ENCODE measurements at regions of chr2 and their contacts with region 1.

Region 1: DNA sequence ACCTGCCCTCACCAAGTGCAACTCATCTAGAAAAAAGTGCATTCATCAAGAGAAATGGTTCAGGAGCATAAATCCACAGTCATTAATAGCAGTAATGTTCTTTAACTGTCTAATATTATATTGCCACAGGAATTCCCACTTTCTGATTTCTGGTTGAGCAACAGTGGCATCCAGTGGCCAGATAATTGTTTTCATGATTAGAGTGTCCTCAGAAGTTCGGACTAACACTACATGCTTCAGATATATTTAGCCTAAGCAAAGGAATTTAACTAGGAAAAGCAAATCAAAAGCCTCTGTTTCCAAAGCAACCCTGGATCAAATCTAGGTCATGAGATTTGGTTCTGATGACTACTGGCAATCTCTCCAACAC is 9.8 kb upstream of the ERBB4 start:
- DNase-seq: peak; percentile 67
- H3K4me3 ChIP-seq: no peak overlapping the region
- H3K27ac ChIP-seq: no peak overlapping the region
- H3K4me1 ChIP-seq: no peaks in the 10 kb centered on the region
- H3K27me3 ChIP-seq: no peaks in the 10 kb centered on the region

Region 2: DNA sequence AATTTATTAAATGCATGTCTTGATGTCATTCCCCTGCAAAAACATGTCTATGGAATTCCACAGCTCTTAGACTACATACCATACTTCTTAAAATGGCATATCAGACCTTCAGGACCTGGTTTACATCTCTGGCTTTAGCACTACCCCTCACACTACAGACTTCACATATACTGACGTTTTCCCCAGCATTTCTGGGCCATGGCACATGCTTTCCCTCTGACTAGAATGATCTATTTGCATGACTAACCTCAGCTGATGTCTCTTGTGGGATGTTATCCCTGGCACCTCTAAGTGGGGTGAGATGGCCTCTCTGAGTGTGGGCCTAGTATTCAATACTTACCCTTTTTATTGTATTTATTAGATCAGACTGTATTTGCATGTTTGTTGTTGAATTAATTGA is 391.4 kb before region 1 on chr2:
- in situ Hi-C with region 1: loop called (anchors 25 kb)
- DNase-seq: peak; percentile 56
- H3K4me3 ChIP-seq: no peak overlapping the region
- H3K27ac ChIP-seq: no peak overlapping the region
- H3K4me1 ChIP-seq: 0 out of 2 replicates have a peak, but pooled peaks cover 7% of the 10 kb centered on the region
- H3K27me3 ChIP-seq: no peaks in the 10 kb centered on the region

Region 3: GRCh38 chr2:212845941-212846340 is 297.5 kb after region 1 on chr2:
- in situ Hi-C with region 1: no loop called
- DNase-seq: peak; percentile 88
- H3K4me3 ChIP-seq: peak overlapping the region; percentile 21; the same call in 1 of the 2 replicates
- H3K27ac ChIP-seq: peak overlapping the region; percentile 96
- H3K4me1 ChIP-seq: peaks cover 49% of the 10 kb centered on the region
- H3K27me3 ChIP-seq: no peaks in the 10 kb centered on the region